CD8-positive, alpha-beta memory T cell (primary cell): ENCODE measurements at regions of chr19 and their contacts with region 1.

Region 1: GRCh38 chr19:18328340-18329034 is 5.6 kb upstream of the LSM4 start:
- DNase-seq: peak; percentile 73 to 92 (median 86)
- H3K4me3 ChIP-seq: peak overlapping the region; percentile 50
- H3K4me3 Mint-ChIP-seq: peak overlapping the region; percentile 60 to 79 (median 69)
- H3K27ac ChIP-seq: peak overlapping the region; percentile 1
- H3K27ac Mint-ChIP-seq: peak overlapping the region in 7 of 8 donors; percentile 6 to 61 (median 42)
- H3K4me1 ChIP-seq: peaks cover 16% of the 10 kb centered on the region
- H3K4me1 Mint-ChIP-seq: peaks cover 15 to 19% (median 16%) of the 10 kb centered on the region in 3 donors
- H3K27me3 ChIP-seq: no peaks in the 10 kb centered on the region
- H3K27me3 Mint-ChIP-seq: peaks cover 0 to 3% of the 10 kb centered on the region in 2 donors

Region 2: DNA sequence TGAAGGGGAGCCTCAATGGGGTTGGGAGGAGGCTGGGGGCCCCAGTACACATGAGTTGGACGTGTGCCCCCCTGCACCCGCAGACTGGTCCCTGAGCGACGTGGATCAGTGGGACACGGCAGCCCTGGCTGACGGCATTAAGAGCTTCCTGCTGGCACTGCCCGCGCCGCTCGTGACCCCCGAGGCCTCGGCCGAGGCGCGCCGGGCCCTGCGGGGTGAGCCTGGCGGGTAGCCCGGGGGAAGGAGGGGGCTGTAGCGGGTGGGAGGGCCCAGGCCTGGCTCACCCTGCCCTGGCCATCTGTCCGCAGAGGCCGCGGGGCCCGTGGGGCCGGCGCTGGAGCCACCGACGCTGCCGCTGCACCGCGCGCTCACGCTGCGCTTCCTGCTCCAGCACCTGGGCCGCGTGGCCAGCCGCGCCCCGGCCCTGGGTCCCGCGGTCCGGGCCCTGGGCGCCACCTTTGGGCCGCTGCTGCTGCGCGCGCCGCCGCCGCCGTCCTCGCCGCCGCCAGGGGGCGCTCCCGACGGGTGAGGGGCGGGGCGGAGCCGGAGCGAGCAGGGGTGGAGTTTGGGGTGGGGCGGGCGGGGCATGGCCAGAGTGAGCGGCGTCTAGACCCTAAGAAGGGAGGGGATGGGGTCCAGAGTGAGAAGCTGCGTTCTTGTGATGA is 167.4 kb before region 1 on chr19:
- CTCF ChIA-PET with region 1: no interaction called
- POLR2A ChIA-PET with region 1: no interaction called
- DNase-seq: peak; percentile 77 to 84 (median 80)
- H3K4me3 ChIP-seq: no peak overlapping the region
- H3K4me3 Mint-ChIP-seq: peak overlapping the region in 6 of 7 donors; percentile 24 to 60 (median 44)
- H3K27ac ChIP-seq: peak overlapping the region; percentile 61
- H3K27ac Mint-ChIP-seq: peak overlapping the region in 2 of 8 donors; percentile 22 to 88
- H3K4me1 ChIP-seq: peaks cover 13% of the 10 kb centered on the region
- H3K4me1 Mint-ChIP-seq: peaks cover 8 to 19% (median 9%) of the 10 kb centered on the region in 3 donors
- H3K27me3 ChIP-seq: no peaks in the 10 kb centered on the region
- H3K27me3 Mint-ChIP-seq: no peaks in the 10 kb centered on the region

Region 3: DNA sequence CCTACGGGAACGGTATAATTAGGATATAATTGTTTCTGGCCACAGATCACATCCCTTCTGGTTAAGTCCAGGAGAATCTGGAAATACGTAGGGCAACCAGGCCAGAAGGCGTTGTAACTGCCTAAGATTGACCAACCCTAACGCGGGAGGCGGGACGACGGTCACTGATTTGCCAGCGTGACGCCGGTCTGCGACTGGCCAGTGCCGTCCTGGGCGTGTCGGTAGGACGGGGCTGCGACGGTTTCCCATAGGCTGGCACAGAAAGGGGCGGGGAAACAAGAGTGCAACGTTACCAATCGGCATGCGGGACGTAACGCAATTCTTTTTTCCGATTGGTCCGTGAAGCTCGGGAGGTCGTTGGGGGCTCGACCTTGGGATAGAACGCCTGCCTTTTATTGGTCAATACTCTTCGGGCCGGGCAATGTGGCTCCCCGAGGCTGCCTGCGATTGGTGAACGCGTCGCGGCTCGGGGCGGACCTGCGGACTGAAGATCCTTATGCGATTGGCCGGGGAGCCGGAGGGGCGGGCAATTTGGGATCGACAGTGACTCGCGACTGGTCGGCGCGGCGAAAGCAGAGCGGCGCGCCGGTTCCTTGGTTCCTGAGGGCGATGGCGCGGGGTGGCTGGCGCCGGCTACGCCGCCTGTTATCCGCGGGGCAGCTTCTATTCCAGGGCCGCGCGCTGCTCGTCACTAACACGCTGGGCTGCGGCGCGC is 135.7 kb before region 1 on chr19 and contains the start of gene MPV17L2:
- CTCF ChIA-PET with region 1: interaction called, 13 read pairs
- POLR2A ChIA-PET with region 1: no interaction called
- DNase-seq: peak; percentile 98 to 99 (median 99)
- H3K4me3 ChIP-seq: peak within 1 kb of the TSS; percentile 74
- H3K4me3 Mint-ChIP-seq: peak within 1 kb of the TSS; percentile 82 to 95 (median 89)
- H3K27ac ChIP-seq: peak within 1 kb of the TSS; percentile 71
- H3K27ac Mint-ChIP-seq: peak within 1 kb of the TSS; percentile 76 to 98 (median 96)
- H3K4me1 ChIP-seq: peaks cover 16% of the 10 kb centered on the region
- H3K4me1 Mint-ChIP-seq: peaks cover 21 to 28% (median 22%) of the 10 kb centered on the region in 3 donors
- H3K27me3 ChIP-seq: no peaks in the 10 kb centered on the region
- H3K27me3 Mint-ChIP-seq: peaks cover 0 to 3% of the 10 kb centered on the region in 2 donors
- total RNA-seq, gene MPV17L2: 24.2 to 24.6 TPM

Region 4: GRCh38 chr19:18203863-18204393 is 124.6 kb before region 1 on chr19 and contains the start of gene RAB3A:
- CTCF ChIA-PET with region 1: interaction called, 10 read pairs
- POLR2A ChIA-PET with region 1: interaction called, 3 read pairs
- DNase-seq: peak; percentile 99 to 100 (median 99)
- H3K4me3 ChIP-seq: peak within 1 kb of the TSS; percentile 94
- H3K4me3 Mint-ChIP-seq: peak within 1 kb of the TSS; percentile 93 to 98 (median 96)
- H3K27ac ChIP-seq: peak within 1 kb of the TSS; percentile 78
- H3K27ac Mint-ChIP-seq: peak within 1 kb of the TSS; percentile 81 to 99 (median 97)
- H3K4me1 ChIP-seq: peaks cover 17% of the 10 kb centered on the region
- H3K4me1 Mint-ChIP-seq: peaks cover 16 to 36% (median 22%) of the 10 kb centered on the region in 3 donors
- H3K27me3 ChIP-seq: peaks cover 5% of the 10 kb centered on the region
- H3K27me3 Mint-ChIP-seq: peaks cover 3 to 6% of the 10 kb centered on the region in 2 donors
- total RNA-seq, gene RAB3A: 2.9 to 3.8 TPM

Region 5: DNA sequence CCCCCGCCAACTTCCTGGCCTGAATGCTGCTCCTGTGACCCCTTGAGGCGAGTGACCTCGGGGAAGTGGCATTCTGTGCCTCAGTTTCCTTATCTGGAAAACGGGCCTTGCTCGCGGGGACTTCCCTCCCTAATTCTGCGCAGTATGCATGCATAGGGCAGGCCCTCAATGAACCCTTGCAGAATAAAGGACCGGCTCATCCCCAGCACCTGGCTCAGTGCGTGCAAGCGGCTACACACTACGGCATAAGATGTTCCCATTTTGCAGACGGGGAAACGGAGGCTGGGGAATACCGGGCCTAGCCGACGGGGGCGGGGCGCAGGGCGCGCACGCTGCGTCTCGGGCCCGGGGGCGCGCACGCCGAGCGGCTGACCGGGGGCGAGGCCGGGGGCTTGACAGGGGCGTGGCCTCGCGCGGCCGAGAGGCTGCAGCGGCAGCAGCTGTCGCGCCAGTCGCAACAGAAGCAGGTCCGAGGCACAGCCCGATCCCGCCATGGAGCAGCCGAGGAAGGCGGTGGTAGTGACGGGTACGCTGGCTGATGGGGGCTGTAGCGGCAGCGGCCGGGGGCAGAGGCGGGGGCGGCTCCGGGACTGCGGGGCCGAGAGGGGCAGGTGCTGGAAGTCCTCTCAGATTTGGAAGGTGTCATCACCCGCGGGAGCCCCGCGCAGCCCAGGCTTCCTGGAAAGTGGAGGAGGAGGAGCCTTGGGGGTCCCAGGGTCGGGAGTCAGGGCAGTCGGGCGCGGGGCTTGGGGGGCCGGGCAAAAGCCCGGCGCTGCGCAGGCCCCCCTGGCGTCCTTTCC is 11.9 kb after region 1 on chr19 and contains the start of gene PGPEP1:
- CTCF ChIA-PET with region 1: interaction called, 13 read pairs
- POLR2A ChIA-PET with region 1: no interaction called
- DNase-seq: peak; percentile 50 to 66 (median 58)
- H3K4me3 ChIP-seq: peak within 1 kb of the TSS; percentile 81
- H3K4me3 Mint-ChIP-seq: peak within 1 kb of the TSS; percentile 83 to 99 (median 90)
- H3K27ac ChIP-seq: peak within 1 kb of the TSS; percentile 82
- H3K27ac Mint-ChIP-seq: peak within 1 kb of the TSS; percentile 73 to 95 (median 90)
- H3K4me1 ChIP-seq: peaks cover 18% of the 10 kb centered on the region
- H3K4me1 Mint-ChIP-seq: peaks cover 10 to 24% (median 24%) of the 10 kb centered on the region in 3 donors
- H3K27me3 ChIP-seq: no peaks in the 10 kb centered on the region
- H3K27me3 Mint-ChIP-seq: peaks cover 0 to 2% of the 10 kb centered on the region in 2 donors
- total RNA-seq, gene PGPEP1: 27.3 to 27.7 TPM

Region 6: DNA sequence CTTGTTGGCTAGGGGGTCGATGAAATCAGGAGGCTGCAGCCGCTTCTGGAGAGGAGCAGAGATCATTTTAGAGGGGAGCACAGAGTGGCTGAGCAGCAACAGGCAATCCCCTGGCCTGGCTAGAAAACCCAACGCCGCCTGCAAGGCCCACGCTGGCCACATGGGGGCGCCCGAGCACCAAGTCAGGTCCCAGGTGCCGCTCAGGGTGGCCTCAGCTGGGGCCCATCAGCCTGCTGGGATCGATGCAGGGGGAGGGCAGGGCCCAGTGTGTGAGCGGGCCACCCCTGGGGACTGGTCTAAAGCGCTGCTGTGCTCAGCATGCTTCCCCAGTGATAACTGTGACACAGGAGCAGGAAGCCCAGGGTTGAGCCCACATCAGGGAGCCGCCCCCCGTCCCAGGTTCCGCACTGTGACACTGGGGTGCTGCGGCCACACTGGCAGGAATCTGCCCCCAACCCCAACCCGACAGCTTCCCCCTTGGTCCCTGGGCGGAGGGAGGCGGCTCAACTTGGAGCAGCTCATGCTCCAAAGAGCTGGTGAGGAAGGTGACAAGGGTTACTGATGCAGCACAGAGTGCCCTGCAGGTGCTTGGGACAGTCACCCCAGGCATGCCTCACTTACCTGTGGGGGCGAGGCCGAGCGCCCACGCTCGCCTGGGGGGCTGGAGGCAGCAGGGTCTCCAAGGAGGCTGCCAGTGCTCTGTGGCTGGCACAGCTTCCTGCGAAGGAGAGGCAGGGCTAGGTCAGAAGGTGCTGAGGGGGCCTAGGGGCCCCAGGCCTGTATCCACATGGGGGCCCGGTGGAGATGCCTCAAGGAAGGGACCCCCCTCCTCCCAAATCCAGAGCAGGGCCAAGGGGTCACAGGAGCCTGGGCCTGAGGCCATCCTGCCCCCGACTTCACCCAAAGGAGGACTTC is 122.7 kb after region 1 on chr19:
- CTCF ChIA-PET with region 1: no interaction called
- POLR2A ChIA-PET with region 1: no interaction called
- DNase-seq: peak; percentile 78 to 89 (median 83)
- H3K4me3 ChIP-seq: no peak overlapping the region
- H3K4me3 Mint-ChIP-seq: peak overlapping the region in 1 of 7 donors; percentile 84
- H3K27ac ChIP-seq: no peak overlapping the region
- H3K27ac Mint-ChIP-seq: peak overlapping the region in 5 of 8 donors; percentile 14 to 94 (median 80)
- H3K4me1 ChIP-seq: no peaks in the 10 kb centered on the region
- H3K4me1 Mint-ChIP-seq: peaks cover 4 to 8% (median 5%) of the 10 kb centered on the region in 3 donors
- H3K27me3 ChIP-seq: no peaks in the 10 kb centered on the region
- H3K27me3 Mint-ChIP-seq: no peaks in the 10 kb centered on the region